ENCODE measurements at regions of chr16 and their contacts with region 1.

Region 1: GRCh38 chr16:71412270-71413160 is 29.3 kb downstream of the TLE7 start:
- DNase-seq: peak; percentile 77
- H3K4me3 ChIP-seq: no peak overlapping the region
- H3K27ac ChIP-seq: no peak overlapping the region
- H3K4me1 ChIP-seq: no peaks in the 10 kb centered on the region
- H3K27me3 ChIP-seq: peaks cover 20% of the 10 kb centered on the region

Region 2: GRCh38 chr16:71499775-71500364 is 87.4 kb after region 1 on chr16:
- in situ Hi-C with region 1: loop called (anchors 5 kb)
- DNase-seq: peak; percentile 71
- H3K4me3 ChIP-seq: no peak overlapping the region
- H3K27ac ChIP-seq: no peak overlapping the region
- H3K4me1 ChIP-seq: no peaks in the 10 kb centered on the region
- H3K27me3 ChIP-seq: no peaks in the 10 kb centered on the region

Region 3: DNA sequence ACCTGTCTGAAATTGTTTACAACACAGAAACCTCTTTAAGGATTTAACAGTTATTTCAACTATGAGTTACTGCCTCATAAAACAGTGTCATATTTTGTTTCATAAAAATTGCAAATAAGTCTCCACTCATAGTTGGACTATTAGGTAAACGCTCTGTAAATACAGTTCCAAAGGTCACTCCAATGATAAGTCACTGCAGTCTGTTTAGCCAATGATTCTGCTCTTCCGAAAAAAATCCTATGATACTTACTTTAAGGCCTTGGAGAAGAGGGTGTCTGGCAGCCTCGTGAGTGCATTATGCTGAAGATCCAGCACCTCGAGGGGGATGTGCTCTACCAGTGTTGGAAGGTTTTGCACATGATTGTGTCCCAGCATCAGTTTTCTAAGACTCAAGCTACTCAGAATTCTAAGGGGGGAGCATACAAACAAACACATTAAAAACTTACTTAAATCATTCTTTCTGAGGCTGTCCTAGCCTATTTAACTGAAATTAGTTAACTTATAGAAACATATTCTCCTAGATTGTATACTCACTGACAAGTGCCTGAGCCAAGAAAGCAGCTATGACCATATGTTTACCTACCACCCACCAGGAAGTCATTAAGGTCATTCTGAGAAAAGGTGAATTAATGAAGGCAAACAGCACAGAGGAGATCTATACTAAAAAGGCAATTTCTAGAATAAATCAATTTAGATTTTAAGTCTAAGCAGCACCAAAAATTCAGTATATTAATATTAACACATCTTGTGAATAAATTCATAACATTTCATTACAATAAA is 254.6 kb after region 1 on chr16:
- in situ Hi-C with region 1: no loop called
- DNase-seq: no peak
- H3K4me3 ChIP-seq: no peak overlapping the region
- H3K27ac ChIP-seq: no peak overlapping the region
- H3K4me1 ChIP-seq: no peaks in the 10 kb centered on the region
- H3K27me3 ChIP-seq: no peaks in the 10 kb centered on the region